Mucosa of descending colon (tissue), 3 donors: ENCODE measurements at regions of chr10 and their contacts with region 1.

Region 1: GRCh38 chr10:63629363-63630084 is 108.3 kb downstream of the REEP3 start:
- DNase-seq: peak; percentile 94 to 97 (median 96)
- ATAC-seq: peak; percentile 76
- H3K4me3 ChIP-seq: peak overlapping the region; percentile 29
- H3K4me1 ChIP-seq: peaks cover 23% of the 10 kb centered on the region
- CTCF ChIP-seq: peak; percentile 72

Region 2: DNA sequence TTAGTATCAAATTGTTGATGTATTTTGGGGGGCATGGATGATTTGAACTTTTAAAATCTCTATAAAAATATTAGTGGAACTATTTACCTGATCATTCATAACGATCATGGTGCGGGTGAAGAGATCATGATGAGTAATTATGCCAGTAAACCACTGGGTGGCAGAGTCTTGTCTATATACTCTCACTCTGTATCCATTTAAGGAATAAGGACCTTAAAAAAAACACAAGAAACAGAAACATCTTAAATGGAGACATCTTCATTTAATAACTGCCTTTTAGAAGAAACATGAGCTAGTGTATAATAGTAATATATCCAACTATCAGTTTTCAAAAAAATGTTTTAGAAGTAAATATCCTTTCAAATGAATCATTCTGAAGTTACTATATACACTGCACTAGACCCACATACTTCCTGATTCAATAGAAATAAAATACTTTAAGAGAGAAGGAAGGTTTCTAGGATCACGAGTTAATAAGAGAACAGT is 412.4 kb before region 1 on chr10:
- intact Hi-C with region 1: loop called in 1 of 2 experiments (anchors 5 kb)
- DNase-seq: peak in 1 of 3 donors; percentile 46
- ATAC-seq: peak; percentile 90
- H3K4me3 ChIP-seq: no peak overlapping the region
- H3K4me1 ChIP-seq: peaks cover 20% of the 10 kb centered on the region
- CTCF ChIP-seq: peak; percentile 39

Region 3: GRCh38 chr10:63465293-63466143 is 164.0 kb before region 1 on chr10 and contains the start of gene JMJD1C:
- intact Hi-C with region 1: loop called in 1 of 2 experiments (anchors 10 kb)
- DNase-seq: peak; percentile 80 to 89 (median 85)
- ATAC-seq: peak; percentile 94
- H3K4me3 ChIP-seq: peak within 1 kb of the TSS; percentile 82
- H3K4me1 ChIP-seq: peaks cover 8% of the 10 kb centered on the region
- CTCF ChIP-seq: no peak
- total RNA-seq, gene JMJD1C: 54.1 to 83.8 (median 82.1) TPM

Region 4: DNA sequence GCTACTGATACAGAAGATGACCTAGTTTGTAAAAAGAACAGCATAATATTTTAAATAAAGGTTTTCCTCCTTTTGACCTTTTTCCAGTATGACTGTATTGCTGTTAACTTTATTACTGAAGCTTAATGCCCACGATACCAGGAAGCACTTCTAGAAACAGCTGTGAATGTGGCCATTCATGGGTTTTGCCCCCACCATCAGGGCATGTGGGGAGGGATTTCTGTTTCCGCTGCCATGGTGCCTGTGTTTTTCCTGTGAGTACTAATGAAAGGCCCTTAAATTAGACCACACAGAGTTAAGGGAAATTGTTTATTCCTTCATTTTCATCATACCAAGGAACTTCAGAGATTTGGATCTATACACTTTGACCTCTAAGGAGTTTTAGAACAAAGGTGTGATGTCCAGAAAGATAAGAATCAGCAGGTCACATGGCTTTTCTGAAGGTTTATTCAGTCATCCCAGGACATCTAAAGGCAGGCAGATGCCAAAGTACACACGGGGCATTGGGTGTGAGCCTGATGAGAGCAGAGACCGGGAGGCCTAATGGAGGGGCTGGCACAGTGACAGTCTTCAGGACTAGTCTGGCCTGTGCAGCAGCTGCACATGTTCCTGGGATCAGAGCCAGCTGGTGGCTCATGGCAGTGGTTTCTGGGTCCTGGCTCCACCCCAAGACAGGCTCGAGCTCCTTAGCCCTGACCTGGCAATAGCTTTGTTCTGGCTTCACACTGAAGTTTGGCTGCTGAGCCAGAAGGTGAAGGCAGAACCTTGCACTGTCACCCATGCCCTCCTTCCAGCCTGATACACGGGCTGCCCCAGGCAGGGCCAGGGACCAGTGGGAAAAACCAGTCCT is 82.6 kb after region 1 on chr10:
- intact Hi-C with region 1: loop called (anchors 5 kb)
- DNase-seq: peak; percentile 92 to 97 (median 94)
- ATAC-seq: peak; percentile 95
- H3K4me3 ChIP-seq: no peak overlapping the region
- H3K4me1 ChIP-seq: peaks cover 31% of the 10 kb centered on the region
- CTCF ChIP-seq: no peak